ENCODE measurements at regions of chr12 and their contacts with region 1.

Region 1: DNA sequence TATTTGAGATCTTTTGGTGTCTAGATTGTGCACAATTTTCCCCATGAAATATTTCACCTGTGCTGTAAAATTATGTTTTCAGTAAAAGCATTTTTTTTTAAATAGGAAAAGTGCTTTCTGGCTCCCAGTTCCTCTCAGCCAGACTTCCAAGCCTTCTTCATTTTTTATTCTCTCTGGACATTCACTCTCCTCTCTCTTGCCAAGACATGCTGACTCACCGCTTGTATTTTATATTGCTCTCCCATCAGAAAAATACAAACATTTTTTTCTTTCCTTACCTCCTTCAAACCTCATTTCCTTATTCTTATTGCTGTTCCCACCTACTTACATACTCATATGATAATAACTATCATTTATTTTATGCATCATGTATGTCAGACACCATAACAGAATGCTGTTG is 37.7 kb upstream of the ZNF641 start:
- DNase-seq: no peak
- ATAC-seq: no peak
- H3K4me3 ChIP-seq: no peak overlapping the region
- H3K27ac ChIP-seq: no peak overlapping the region
- H3K4me1 ChIP-seq: peaks cover 4 to 6% of the 10 kb centered on the region in 2 donors
- H3K27me3 ChIP-seq: no peaks in the 10 kb centered on the region
- CTCF ChIP-seq: no peak
- POLR2A ChIP-seq: no peak

Region 2: DNA sequence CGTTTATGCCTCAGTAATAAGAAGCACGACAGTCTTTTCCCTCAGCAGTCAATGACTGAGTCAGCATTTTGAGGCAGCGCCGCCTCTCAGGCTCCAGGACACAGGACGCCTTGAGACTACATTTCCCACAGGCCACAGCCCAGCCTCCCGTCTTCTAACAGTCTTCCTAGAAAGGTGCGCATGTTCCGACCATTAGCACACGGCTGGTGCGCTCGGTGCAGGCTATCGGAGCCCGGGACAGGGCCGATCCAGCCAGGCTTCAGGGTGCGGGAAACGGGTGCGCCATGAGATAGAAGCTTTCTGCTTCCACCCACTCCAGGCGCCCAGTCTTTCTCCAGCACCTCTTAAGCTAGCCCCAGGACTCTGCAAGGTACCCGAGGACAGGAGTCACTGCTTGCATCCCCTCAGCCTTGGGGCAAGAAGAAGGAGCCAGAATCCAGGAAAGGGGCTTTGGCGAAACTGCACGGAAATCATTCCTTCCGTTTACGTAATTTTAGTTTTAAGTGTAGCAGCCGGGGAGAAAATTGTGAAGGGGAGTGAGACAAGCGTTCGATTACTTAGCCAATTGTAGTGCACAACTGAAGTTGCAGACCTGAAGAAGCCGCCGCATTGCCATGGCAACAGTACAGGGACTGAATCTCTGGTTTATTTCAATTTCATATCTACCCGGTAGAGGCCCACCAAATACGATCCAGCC is 91.7 kb before region 1 on chr12:
- in situ Hi-C with region 1: loop called in 1 of 4 experiments (anchors 5 kb)
- intact Hi-C with region 1: no loop called
- DNase-seq: peak; percentile 36 to 63
- ATAC-seq: peak; percentile 95 to 96
- H3K4me3 ChIP-seq: peak overlapping the region; percentile 54 to 68 (median 58)
- H3K27ac ChIP-seq: peak overlapping the region in 1 of 4 donors; percentile 33
- H3K4me1 ChIP-seq: peaks cover 0 to 4% of the 10 kb centered on the region in 2 donors
- H3K27me3 ChIP-seq: no peaks in the 10 kb centered on the region
- CTCF ChIP-seq: no peak
- POLR2A ChIP-seq: peak in 1 of 2 donors; percentile 7

Region 3: GRCh38 chr12:48690990-48691389 is 302.6 kb after region 1 on chr12:
- in situ Hi-C with region 1: no loop called
- intact Hi-C with region 1: no loop called
- DNase-seq: no peak
- ATAC-seq: peak in 1 of 2 donors; percentile 31
- H3K4me3 ChIP-seq: no peak overlapping the region
- H3K27ac ChIP-seq: peak overlapping the region in 2 of 4 donors; percentile 35 to 48
- H3K4me1 ChIP-seq: peaks cover 22 to 42% of the 10 kb centered on the region in 2 donors
- H3K27me3 ChIP-seq: no peaks in the 10 kb centered on the region
- CTCF ChIP-seq: no peak
- POLR2A ChIP-seq: no peak